ENCODE measurements at regions of chr4 and their contacts with region 1.

Region 1: GRCh38 chr4:3292571-3293400 is at the start of gene RGS12:
- DNase-seq: peak; percentile 65 to 91 (median 75)
- ATAC-seq: peak; percentile 91
- H3K4me3 ChIP-seq: peak within 1 kb of the TSS; percentile 79
- H3K4me3 Mint-ChIP-seq: peak within 1 kb of the TSS; percentile 86 to 98 (median 92)
- H3K27ac ChIP-seq: peak within 1 kb of the TSS; percentile 69
- H3K27ac Mint-ChIP-seq: peak within 1 kb of the TSS; percentile 68 to 93 (median 82)
- H3K4me1 ChIP-seq: peaks cover 5 to 8% of the 10 kb centered on the region in 2 donors
- H3K4me1 Mint-ChIP-seq: peaks cover 12 to 37% (median 33%) of the 10 kb centered on the region in 7 donors
- H3K27me3 ChIP-seq: no peaks in the 10 kb centered on the region
- H3K27me3 Mint-ChIP-seq: peaks cover 0 to 67% (median 0%) of the 10 kb centered on the region in 5 donors
- total RNA-seq, gene RGS12: 2.5 to 13.3 (median 7.5) TPM

Region 2: DNA sequence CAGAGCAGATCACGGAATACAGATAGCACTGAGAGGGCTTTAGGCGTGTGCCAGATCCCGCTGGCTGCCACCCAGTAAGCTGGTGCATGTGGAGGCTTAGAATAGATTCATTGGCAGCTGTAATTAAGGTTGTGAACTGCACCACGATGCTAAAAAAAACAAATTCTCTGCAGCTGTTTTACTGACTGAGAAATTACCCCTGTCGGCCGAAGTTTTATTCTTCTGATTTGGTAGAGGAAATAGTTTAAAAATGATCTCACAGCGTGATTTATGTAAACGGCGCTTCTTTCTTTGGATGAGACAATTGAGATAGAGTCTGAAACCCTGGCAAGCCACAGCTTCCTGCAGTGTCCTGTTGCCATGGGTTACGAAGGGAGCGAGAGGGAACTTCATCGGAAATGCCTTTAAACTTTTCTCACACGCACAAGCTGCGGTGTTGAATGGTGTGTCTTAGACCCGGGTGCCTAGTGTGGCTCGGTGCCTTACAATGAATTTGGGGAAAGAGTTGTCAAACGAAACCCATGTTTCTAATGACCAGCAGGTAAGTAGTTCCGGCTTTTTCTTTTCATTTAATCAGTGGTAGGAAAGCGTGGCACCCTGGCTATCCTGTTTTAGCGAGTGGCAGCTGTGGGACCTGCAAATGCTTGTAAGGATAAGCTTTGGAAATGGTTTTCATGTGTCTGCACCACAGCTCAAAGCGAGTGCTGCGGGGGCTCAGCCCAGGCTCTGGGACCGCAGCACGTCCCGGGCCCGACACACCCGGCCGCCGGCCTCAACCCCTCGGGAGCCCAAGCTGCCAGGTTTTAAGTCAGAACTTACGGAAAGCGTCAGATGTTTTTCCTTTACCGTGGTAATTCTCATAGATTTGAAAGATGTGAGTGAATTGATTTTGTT is 77.2 kb after region 1 on chr4:
- CTCF ChIA-PET with region 1: no interaction called
- POLR2A ChIA-PET with region 1: no interaction called
- intact Hi-C with region 1: loop called in 1 of 2 experiments (anchors 2 kb)
- DNase-seq: peak in 7 of 9 donors; percentile 55 to 72 (median 65)
- ATAC-seq: peak; percentile 66
- H3K4me3 ChIP-seq: peak overlapping the region; percentile 45
- H3K4me3 Mint-ChIP-seq: peak overlapping the region; percentile 67 to 89 (median 84)
- H3K27ac ChIP-seq: peak overlapping the region; percentile 19
- H3K27ac Mint-ChIP-seq: peak overlapping the region; percentile 12 to 88 (median 63)
- H3K4me1 ChIP-seq: peaks cover 11 to 37% of the 10 kb centered on the region in 2 donors
- H3K4me1 Mint-ChIP-seq: peaks cover 12 to 54% (median 40%) of the 10 kb centered on the region in 7 donors
- H3K27me3 ChIP-seq: no peaks in the 10 kb centered on the region
- H3K27me3 Mint-ChIP-seq: peaks cover 9 to 41% (median 16%) of the 10 kb centered on the region in 5 donors